CD8-positive, alpha-beta T cell (primary cell): ENCODE measurements at regions of chr14 and their contacts with region 1.

Region 1: GRCh38 chr14:88168498-88169165 is 154.4 kb downstream of the KCNK10 start:
- DNase-seq: peak; percentile 24 to 77 (median 55)
- ATAC-seq: peak; percentile 96
- H3K4me3 ChIP-seq: no peak overlapping the region
- H3K4me3 Mint-ChIP-seq: peak overlapping the region; percentile 58
- H3K27ac ChIP-seq: no peak overlapping the region
- H3K27ac Mint-ChIP-seq: no peak overlapping the region
- H3K4me1 ChIP-seq: no peaks in the 10 kb centered on the region
- H3K4me1 Mint-ChIP-seq: peaks cover 16% of the 10 kb centered on the region
- H3K27me3 ChIP-seq: no peaks in the 10 kb centered on the region
- H3K27me3 Mint-ChIP-seq: peaks cover 19% of the 10 kb centered on the region
- CTCF ChIP-seq: peak; percentile 70

Region 2: GRCh38 chr14:87952307-87953094 is 216.1 kb before region 1 on chr14:
- CTCF ChIA-PET with region 1: interaction called, 120 read pairs
- POLR2A ChIA-PET with region 1: no interaction called
- intact Hi-C with region 1: no loop called
- DNase-seq: peak in 2 of 9 experiments; percentile 40 to 63
- ATAC-seq: peak; percentile 54
- H3K4me3 ChIP-seq: peak overlapping the region in 1 of 2 experiments; percentile 9
- H3K4me3 Mint-ChIP-seq: peak overlapping the region; percentile 69
- H3K27ac ChIP-seq: peak overlapping the region; percentile 49 to 73
- H3K27ac Mint-ChIP-seq: peak overlapping the region; percentile 91
- H3K4me1 ChIP-seq: peaks cover 30% of the 10 kb centered on the region
- H3K4me1 Mint-ChIP-seq: peaks cover 54% of the 10 kb centered on the region
- H3K27me3 ChIP-seq: no peaks in the 10 kb centered on the region
- H3K27me3 Mint-ChIP-seq: no peaks in the 10 kb centered on the region
- CTCF ChIP-seq: no peak

Region 3: DNA sequence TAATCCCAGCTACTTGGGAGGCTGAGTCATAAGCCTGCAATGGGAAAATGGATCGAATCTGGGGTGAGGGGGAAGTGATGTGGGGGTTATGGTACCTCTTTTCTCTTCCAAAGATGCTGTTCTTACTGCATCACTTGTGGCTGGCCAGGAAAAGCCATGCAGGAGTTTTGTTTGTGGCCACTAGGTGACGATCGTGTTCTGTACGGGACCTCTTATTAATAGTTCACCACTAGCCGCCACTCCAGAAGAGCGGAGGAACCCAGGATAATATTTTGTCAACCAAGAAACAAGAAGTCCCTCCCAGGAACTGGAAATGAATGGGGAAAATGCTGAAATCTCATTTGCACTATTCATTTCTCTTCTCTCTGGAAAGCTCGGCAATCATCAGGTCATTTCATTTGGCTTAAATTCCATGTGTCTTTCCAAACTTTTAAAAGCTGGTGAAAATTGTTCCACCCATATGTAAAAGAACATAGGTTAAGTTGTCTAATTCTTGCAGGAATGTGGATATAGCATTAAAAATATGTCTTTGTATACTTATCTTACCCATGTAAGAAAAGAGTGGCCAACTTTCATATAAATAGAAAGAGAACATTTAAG is 154.8 kb before region 1 on chr14:
- CTCF ChIA-PET with region 1: interaction called, 38 read pairs
- POLR2A ChIA-PET with region 1: no interaction called
- intact Hi-C with region 1: loop called (anchors 1 to 2 kb)
- DNase-seq: peak in 6 of 9 experiments; percentile 35 to 72 (median 50)
- ATAC-seq: peak; percentile 78
- H3K4me3 ChIP-seq: no peak overlapping the region
- H3K4me3 Mint-ChIP-seq: peak overlapping the region; percentile 6
- H3K27ac ChIP-seq: no peak overlapping the region
- H3K27ac Mint-ChIP-seq: peak overlapping the region; percentile 80
- H3K4me1 ChIP-seq: peaks cover 50% of the 10 kb centered on the region
- H3K4me1 Mint-ChIP-seq: peaks cover 81% of the 10 kb centered on the region
- H3K27me3 ChIP-seq: no peaks in the 10 kb centered on the region
- H3K27me3 Mint-ChIP-seq: no peaks in the 10 kb centered on the region
- CTCF ChIP-seq: peak; percentile 51

Region 4: DNA sequence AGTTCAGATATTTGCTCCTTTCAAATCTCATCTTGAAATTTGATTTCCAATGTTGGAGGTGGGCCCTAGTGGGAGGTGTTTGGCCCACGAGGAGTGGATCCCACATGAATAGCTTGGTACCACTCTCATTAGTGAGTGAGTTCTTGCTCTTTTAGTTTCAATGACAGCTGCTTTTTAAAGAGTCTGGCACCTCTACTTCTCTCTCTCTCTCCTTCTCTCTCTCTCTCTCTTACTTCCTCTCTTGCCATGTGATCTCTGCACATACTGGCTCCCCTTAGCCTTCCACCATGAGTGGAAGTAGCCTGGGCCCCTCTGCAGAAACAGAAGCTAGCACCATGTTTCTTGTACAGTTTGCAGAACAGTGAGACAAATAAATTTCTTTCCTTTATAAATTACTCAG is 138.6 kb before region 1 on chr14:
- CTCF ChIA-PET with region 1: interaction called, 11 read pairs
- POLR2A ChIA-PET with region 1: no interaction called
- intact Hi-C with region 1: no loop called
- DNase-seq: peak in 2 of 9 experiments; percentile 41 to 62
- ATAC-seq: peak; percentile 50
- H3K4me3 ChIP-seq: no peak overlapping the region
- H3K4me3 Mint-ChIP-seq: no peak overlapping the region
- H3K27ac ChIP-seq: peak overlapping the region in 1 of 2 experiments; percentile 10
- H3K27ac Mint-ChIP-seq: peak overlapping the region; percentile 86
- H3K4me1 ChIP-seq: peaks cover 52% of the 10 kb centered on the region
- H3K4me1 Mint-ChIP-seq: peaks cover 69% of the 10 kb centered on the region
- H3K27me3 ChIP-seq: no peaks in the 10 kb centered on the region
- H3K27me3 Mint-ChIP-seq: no peaks in the 10 kb centered on the region
- CTCF ChIP-seq: no peak

Region 5: GRCh38 chr14:88045705-88046104 is 122.9 kb before region 1 on chr14:
- CTCF ChIA-PET with region 1: interaction called, 10 read pairs
- POLR2A ChIA-PET with region 1: no interaction called
- intact Hi-C with region 1: no loop called
- DNase-seq: peak in 1 of 9 experiments; percentile 14
- ATAC-seq: no peak
- H3K4me3 ChIP-seq: no peak overlapping the region
- H3K4me3 Mint-ChIP-seq: no peak overlapping the region
- H3K27ac ChIP-seq: no peak overlapping the region
- H3K27ac Mint-ChIP-seq: no peak overlapping the region
- H3K4me1 ChIP-seq: peaks cover 7% of the 10 kb centered on the region
- H3K4me1 Mint-ChIP-seq: peaks cover 9% of the 10 kb centered on the region
- H3K27me3 ChIP-seq: no peaks in the 10 kb centered on the region
- H3K27me3 Mint-ChIP-seq: no peaks in the 10 kb centered on the region
- CTCF ChIP-seq: no peak

Region 6: GRCh38 chr14:88189417-88190191 is 21.0 kb after region 1 on chr14:
- CTCF ChIA-PET with region 1: interaction called, 10 read pairs
- POLR2A ChIA-PET with region 1: no interaction called
- intact Hi-C with region 1: no loop called
- DNase-seq: peak in 7 of 9 experiments; percentile 20 to 68 (median 52)
- ATAC-seq: no peak
- H3K4me3 ChIP-seq: no peak overlapping the region
- H3K4me3 Mint-ChIP-seq: peak overlapping the region; percentile 55
- H3K27ac ChIP-seq: no peak overlapping the region
- H3K27ac Mint-ChIP-seq: no peak overlapping the region
- H3K4me1 ChIP-seq: no peaks in the 10 kb centered on the region
- H3K4me1 Mint-ChIP-seq: peaks cover 5% of the 10 kb centered on the region
- H3K27me3 ChIP-seq: peaks cover 0 to 2% of the 10 kb centered on the region in 2 experiments
- H3K27me3 Mint-ChIP-seq: peaks cover 25% of the 10 kb centered on the region
- CTCF ChIP-seq: peak; percentile 21

Region 7: DNA sequence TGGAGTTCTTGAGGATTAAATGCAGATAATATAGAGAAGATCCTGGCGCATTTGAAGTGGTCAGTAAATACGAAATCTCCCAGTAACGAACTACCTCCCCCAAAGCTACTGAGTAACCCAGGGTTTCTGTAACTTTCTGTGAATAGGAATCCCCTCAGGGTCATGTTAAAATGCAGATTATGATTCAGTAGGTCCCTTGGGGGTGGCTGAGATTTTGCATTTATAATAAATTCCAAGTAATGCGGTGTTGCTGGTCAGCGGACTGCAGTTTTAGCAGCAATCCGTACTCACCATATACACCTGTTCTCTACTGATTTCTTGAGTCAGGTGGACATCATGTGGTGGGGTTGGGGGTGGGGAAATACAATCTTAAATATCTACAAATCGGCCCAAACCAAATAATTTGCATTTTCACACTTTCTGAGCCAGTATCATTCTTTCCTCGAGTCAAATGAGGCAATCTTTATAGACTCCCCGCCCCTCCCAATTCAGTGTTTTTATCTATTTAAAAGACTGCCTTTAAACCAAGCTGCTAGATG is 217.7 kb after region 1 on chr14:
- CTCF ChIA-PET with region 1: no interaction called
- POLR2A ChIA-PET with region 1: no interaction called
- intact Hi-C with region 1: no loop called
- DNase-seq: no peak
- ATAC-seq: no peak
- H3K4me3 ChIP-seq: peak overlapping the region; percentile 93 to 96
- H3K4me3 Mint-ChIP-seq: peak overlapping the region; percentile 94
- H3K27ac ChIP-seq: peak overlapping the region; percentile 72 to 77
- H3K27ac Mint-ChIP-seq: peak overlapping the region; percentile 39
- H3K4me1 ChIP-seq: peaks cover 8% of the 10 kb centered on the region
- H3K4me1 Mint-ChIP-seq: peaks cover 19% of the 10 kb centered on the region
- H3K27me3 ChIP-seq: no peaks in the 10 kb centered on the region
- H3K27me3 Mint-ChIP-seq: no peaks in the 10 kb centered on the region
- CTCF ChIP-seq: no peak

Region 8: GRCh38 chr14:89504602-89505313 is 1336.1 kb after region 1 on chr14:
- CTCF ChIA-PET with region 1: no interaction called
- POLR2A ChIA-PET with region 1: no interaction called
- intact Hi-C with region 1: no loop called
- DNase-seq: peak in 4 of 9 experiments; percentile 17 to 46 (median 25)
- ATAC-seq: no peak
- H3K4me3 ChIP-seq: no peak overlapping the region
- H3K4me3 Mint-ChIP-seq: no peak overlapping the region
- H3K27ac ChIP-seq: peak overlapping the region in 1 of 2 experiments; percentile 38
- H3K27ac Mint-ChIP-seq: peak overlapping the region; percentile 78
- H3K4me1 ChIP-seq: peaks cover 16% of the 10 kb centered on the region
- H3K4me1 Mint-ChIP-seq: peaks cover 58% of the 10 kb centered on the region
- H3K27me3 ChIP-seq: no peaks in the 10 kb centered on the region
- H3K27me3 Mint-ChIP-seq: no peaks in the 10 kb centered on the region
- CTCF ChIP-seq: no peak